ENCODE measurements at regions of chr19 and their contacts with region 1.

Region 1: GRCh38 chr19:45643024-45643926 is 4.1 kb upstream of the EML2 start:
- DNase-seq: peak; percentile 93
- ATAC-seq: peak; percentile 7
- H3K4me3 Mint-ChIP-seq: peak overlapping the region; percentile 73
- H3K27ac Mint-ChIP-seq: peak overlapping the region; percentile 99
- H3K4me1 Mint-ChIP-seq: peaks cover 46% of the 10 kb centered on the region
- H3K27me3 Mint-ChIP-seq: no peaks in the 10 kb centered on the region

Region 2: GRCh38 chr19:45478454-45479238 is 164.6 kb before region 1 on chr19:
- CTCF ChIA-PET with region 1: interaction called, 14 read pairs
- DNase-seq: peak; percentile 96
- ATAC-seq: peak; percentile 56
- H3K4me3 Mint-ChIP-seq: peak overlapping the region; percentile 55
- H3K27ac Mint-ChIP-seq: peak overlapping the region; percentile 96
- H3K4me1 Mint-ChIP-seq: peaks cover 33% of the 10 kb centered on the region
- H3K27me3 Mint-ChIP-seq: peaks cover 9% of the 10 kb centered on the region

Region 3: DNA sequence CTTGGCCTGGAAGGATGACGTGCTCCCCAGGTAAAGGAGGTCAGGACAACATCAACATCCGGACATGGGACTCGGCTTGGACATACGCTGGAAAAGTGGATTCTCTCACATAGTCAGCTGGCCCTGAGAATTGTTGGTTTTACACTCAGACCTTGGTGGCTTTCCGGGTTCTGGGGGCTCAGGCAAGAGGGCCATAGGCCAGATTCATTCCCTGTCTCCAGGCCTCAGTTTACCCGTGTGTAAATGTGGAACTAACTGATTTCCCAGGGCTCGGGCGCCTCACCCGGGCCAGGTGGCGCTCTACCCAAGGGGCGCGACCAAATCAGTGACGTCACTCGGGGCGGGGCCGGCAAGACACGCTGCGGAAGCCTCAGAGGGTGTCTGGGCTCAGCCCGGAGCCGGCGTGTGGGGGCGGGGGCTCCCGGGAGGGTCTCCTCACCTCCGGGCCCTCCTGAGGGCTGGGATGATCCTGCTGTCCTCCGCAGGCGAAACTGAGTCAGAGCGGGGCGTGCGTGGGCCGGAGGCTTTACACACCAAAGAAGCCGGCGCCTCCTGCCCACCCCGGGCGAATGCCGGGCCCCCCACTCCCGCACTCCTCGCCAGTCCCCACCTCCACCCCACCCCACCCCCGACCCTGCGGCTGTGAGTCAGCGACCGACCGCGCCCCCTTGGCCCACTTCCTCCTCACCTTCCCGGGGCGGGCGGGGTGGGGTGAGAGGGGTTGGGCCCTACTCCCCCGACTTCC is 136.9 kb before region 1 on chr19:
- CTCF ChIA-PET with region 1: interaction called, 21 read pairs
- DNase-seq: peak; percentile 98
- ATAC-seq: peak; percentile 76
- H3K4me3 Mint-ChIP-seq: peak overlapping the region; percentile 99
- H3K27ac Mint-ChIP-seq: peak overlapping the region; percentile 98
- H3K4me1 Mint-ChIP-seq: peaks cover 40% of the 10 kb centered on the region
- H3K27me3 Mint-ChIP-seq: no peaks in the 10 kb centered on the region

Region 4: GRCh38 chr19:45584332-45585157 is 58.7 kb before region 1 on chr19 and contains the start of gene OPA3:
- CTCF ChIA-PET with region 1: interaction called, 20 read pairs
- DNase-seq: peak; percentile 100
- ATAC-seq: peak; percentile 94
- H3K4me3 Mint-ChIP-seq: peak within 1 kb of the TSS; percentile 97
- H3K27ac Mint-ChIP-seq: peak within 1 kb of the TSS; percentile 97
- H3K4me1 Mint-ChIP-seq: peaks cover 21% of the 10 kb centered on the region
- H3K27me3 Mint-ChIP-seq: peaks cover 3% of the 10 kb centered on the region
- total RNA-seq, gene OPA3: 13.4 to 16.7 TPM

Region 5: GRCh38 chr19:45607071-45608029 is 35.9 kb before region 1 on chr19:
- CTCF ChIA-PET with region 1: interaction called, 71 read pairs
- DNase-seq: peak; percentile 57
- ATAC-seq: peak; percentile 47
- H3K4me3 Mint-ChIP-seq: no peak overlapping the region
- H3K27ac Mint-ChIP-seq: peak overlapping the region; percentile 87
- H3K4me1 Mint-ChIP-seq: peaks cover 13% of the 10 kb centered on the region
- H3K27me3 Mint-ChIP-seq: peaks cover 12% of the 10 kb centered on the region

Region 6: DNA sequence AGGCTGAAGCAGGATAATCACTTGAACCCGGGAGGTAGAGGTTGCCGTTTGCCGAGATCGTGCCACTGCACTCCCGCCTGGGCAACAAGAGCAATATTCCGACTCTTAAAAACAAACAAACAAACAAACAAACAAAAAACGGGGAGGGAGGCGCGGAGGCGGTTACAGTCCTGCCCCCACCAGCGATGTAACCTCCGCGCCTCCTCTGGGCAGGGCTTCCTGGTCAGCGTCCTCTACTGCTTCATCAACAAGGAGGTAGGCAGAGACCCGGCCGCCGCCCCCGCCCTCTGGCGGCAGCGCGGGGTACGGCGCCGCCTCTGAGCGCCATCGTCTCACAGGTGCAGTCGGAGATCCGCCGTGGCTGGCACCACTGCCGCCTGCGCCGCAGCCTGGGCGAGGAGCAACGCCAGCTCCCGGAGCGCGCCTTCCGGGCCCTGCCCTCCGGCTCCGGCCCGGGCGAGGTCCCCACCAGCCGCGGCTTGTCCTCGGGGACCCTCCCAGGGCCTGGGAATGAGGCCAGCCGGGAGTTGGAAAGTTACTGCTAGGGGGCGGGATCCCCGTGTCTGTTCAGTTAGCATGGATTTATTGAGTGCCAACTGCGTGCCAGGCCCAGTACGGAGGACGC is 38.2 kb after region 1 on chr19:
- CTCF ChIA-PET with region 1: interaction called, 17 read pairs
- DNase-seq: peak; percentile 91
- ATAC-seq: peak; percentile 91
- H3K4me3 Mint-ChIP-seq: peak overlapping the region; percentile 76
- H3K27ac Mint-ChIP-seq: peak overlapping the region; percentile 86
- H3K4me1 Mint-ChIP-seq: peaks cover 23% of the 10 kb centered on the region
- H3K27me3 Mint-ChIP-seq: peaks cover 4% of the 10 kb centered on the region

Region 7: GRCh38 chr19:45827459-45828093 is 184.3 kb after region 1 on chr19:
- CTCF ChIA-PET with region 1: no interaction called
- DNase-seq: no peak
- ATAC-seq: no peak
- H3K4me3 Mint-ChIP-seq: no peak overlapping the region
- H3K27ac Mint-ChIP-seq: no peak overlapping the region
- H3K4me1 Mint-ChIP-seq: peaks cover 3% of the 10 kb centered on the region
- H3K27me3 Mint-ChIP-seq: no peaks in the 10 kb centered on the region

Measured in activated CD8-positive, alpha-beta memory T cell treated with anti-CD3 and anti-CD28 coated beads, Interleukin-2, amount 10 ng/mL, durations not matched to agents 7 days and 5 days (primary cell).